Breast epithelium (tissue), 4 donors: ENCODE measurements at regions of chr1 and their contacts with region 1.

Region 1: DNA sequence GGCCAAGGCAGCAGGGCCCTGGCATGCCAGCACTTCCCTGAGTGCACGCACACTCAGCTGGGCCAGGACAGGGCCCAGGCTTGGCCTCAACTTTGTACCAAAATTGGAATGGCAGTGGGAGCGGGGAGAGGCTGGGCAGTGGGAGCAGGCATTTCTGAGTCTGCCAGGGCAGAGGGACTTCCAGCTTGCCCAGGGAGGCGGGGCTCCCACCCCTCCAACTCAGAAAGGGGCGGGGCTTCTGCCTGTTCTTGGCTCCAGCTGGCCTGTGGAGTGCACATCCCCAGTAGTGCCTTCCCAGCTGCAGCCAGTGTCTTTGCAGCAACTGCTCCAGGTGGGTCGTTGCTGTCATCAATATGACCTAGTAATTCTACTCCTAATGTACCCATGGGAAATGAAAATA is 10.3 kb upstream of the SNX7 start:
- DNase-seq: no peak
- H3K4me3 ChIP-seq: no peak overlapping the region
- H3K27ac ChIP-seq: no peak overlapping the region
- H3K4me1 ChIP-seq: no peaks in the 10 kb centered on the region
- H3K27me3 ChIP-seq: no peaks in the 10 kb centered on the region
- CTCF ChIP-seq: no peak
- POLR2A ChIP-seq: no peak

Region 2: DNA sequence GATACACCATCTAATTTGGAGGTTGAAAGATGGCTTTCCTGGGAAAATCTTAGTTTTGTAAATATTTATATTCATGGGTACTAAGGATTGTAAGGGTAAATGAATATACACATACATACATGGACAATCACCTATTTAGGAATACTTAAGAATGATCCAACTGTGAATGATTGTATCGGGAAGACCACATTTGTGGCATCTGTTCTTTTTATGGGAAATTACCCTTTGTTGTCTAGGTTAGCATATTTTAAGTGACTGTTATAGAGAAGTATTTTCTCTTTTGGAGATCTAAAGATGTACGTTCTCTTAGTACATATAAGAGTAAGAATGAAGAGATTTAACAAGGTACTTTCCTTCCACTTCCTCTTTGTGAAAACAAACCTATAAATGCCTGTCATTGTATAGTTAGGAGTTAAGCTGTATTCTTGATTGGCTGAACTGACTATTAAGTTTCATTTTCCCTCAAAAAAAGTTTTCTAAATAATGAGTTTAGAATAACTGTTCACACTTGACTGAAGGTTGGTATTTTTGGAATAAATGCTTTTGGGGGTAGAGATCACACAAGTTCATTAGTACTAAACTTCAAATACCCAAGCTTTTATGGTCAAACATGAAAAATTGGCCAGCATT is 37.0 kb after region 1 on chr1:
- intact Hi-C with region 1: no loop called
- DNase-seq: no peak
- H3K4me3 ChIP-seq: no peak overlapping the region
- H3K27ac ChIP-seq: no peak overlapping the region
- H3K4me1 ChIP-seq: no peaks in the 10 kb centered on the region
- H3K27me3 ChIP-seq: no peaks in the 10 kb centered on the region
- CTCF ChIP-seq: no peak
- POLR2A ChIP-seq: no peak

Region 3: DNA sequence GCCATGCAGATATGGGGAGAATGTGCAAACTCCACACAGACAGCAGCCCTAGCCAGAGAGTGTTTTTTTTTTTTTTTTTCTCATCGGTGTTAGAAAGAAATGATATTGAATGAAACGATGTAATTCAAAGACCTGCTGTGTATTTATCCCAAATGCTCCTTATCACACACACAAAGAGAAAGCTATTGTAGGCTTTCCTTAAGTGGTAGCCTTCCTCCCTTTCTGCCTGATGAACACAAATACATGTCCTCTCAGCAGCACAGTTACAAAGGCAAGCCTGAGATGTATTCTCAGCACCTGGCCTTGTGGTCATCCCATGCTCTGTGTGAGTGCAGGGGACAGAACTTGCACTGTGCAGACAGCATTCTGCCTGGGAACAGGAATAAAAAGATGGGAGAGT is 259.6 kb after region 1 on chr1:
- intact Hi-C with region 1: loop called (anchors 5 kb)
- DNase-seq: no peak
- H3K4me3 ChIP-seq: no peak overlapping the region
- H3K27ac ChIP-seq: no peak overlapping the region
- H3K4me1 ChIP-seq: no peaks in the 10 kb centered on the region
- H3K27me3 ChIP-seq: no peaks in the 10 kb centered on the region
- CTCF ChIP-seq: no peak
- POLR2A ChIP-seq: no peak